WTC11 (cell line): ENCODE measurements at regions of chr3 and their contacts with region 1.

Region 1: GRCh38 chr3:170848292-170848917 is 21.6 kb downstream of the RPL22L1 start:
- DNase-seq: no peak
- ATAC-seq: no peak
- H3K4me3 Mint-ChIP-seq: no peak overlapping the region
- H3K27ac Mint-ChIP-seq: no peak overlapping the region
- H3K4me1 Mint-ChIP-seq: no peaks in the 10 kb centered on the region
- H3K27me3 Mint-ChIP-seq: no peaks in the 10 kb centered on the region; the same call in 1 of the 2 replicates
- CTCF ChIP-seq: no peak

Region 2: GRCh38 chr3:170829546-170830272 is 18.7 kb before region 1 on chr3:
- CTCF ChIA-PET with region 1: interaction called, 10 read pairs
- POLR2A ChIA-PET with region 1: no interaction called
- DNase-seq: no peak
- ATAC-seq: peak; percentile 43
- H3K4me3 Mint-ChIP-seq: no peak overlapping the region
- H3K27ac Mint-ChIP-seq: peak overlapping the region; percentile 8
- H3K4me1 Mint-ChIP-seq: peaks cover 72% of the 10 kb centered on the region
- H3K27me3 Mint-ChIP-seq: peaks cover 21% of the 10 kb centered on the region
- CTCF ChIP-seq: no peak

Region 3: GRCh38 chr3:170953229-170953628 is 104.8 kb after region 1 on chr3:
- CTCF ChIA-PET with region 1: no interaction called
- POLR2A ChIA-PET with region 1: no interaction called
- DNase-seq: no peak
- ATAC-seq: peak; percentile 38; the same call in 1 of the 2 replicates
- H3K4me3 Mint-ChIP-seq: no peak overlapping the region
- H3K27ac Mint-ChIP-seq: no peak overlapping the region
- H3K4me1 Mint-ChIP-seq: peaks cover 15% of the 10 kb centered on the region
- H3K27me3 Mint-ChIP-seq: no peaks in the 10 kb centered on the region; the same call in 1 of the 2 replicates
- CTCF ChIP-seq: no peak